Body of pancreas (tissue), 4 donors: ENCODE measurements at regions of chr12 and their contacts with region 1.

Region 1: GRCh38 chr12:62799126-62799736 is 135.7 kb downstream of the PPM1H start:
- DNase-seq: peak; percentile 60 to 69 (median 66)
- ATAC-seq: peak; percentile 68
- H3K4me3 ChIP-seq: no peak overlapping the region
- H3K27ac ChIP-seq: no peak overlapping the region
- H3K4me1 ChIP-seq: no peaks in the 10 kb centered on the region
- H3K27me3 ChIP-seq: no peaks in the 10 kb centered on the region
- CTCF ChIP-seq: peak; percentile 46 to 98 (median 81)
- POLR2A ChIP-seq: no peak

Region 2: GRCh38 chr12:62435303-62436163 is 363.7 kb before region 1 on chr12:
- intact Hi-C with region 1: loop called (anchors 5 kb)
- DNase-seq: peak; percentile 54 to 70 (median 64)
- ATAC-seq: peak; percentile 76
- H3K4me3 ChIP-seq: peak overlapping the region; percentile 21 to 25
- H3K27ac ChIP-seq: no peak overlapping the region
- H3K4me1 ChIP-seq: peaks cover 17% of the 10 kb centered on the region
- H3K27me3 ChIP-seq: no peaks in the 10 kb centered on the region
- CTCF ChIP-seq: peak; percentile 28 to 48 (median 40)
- POLR2A ChIP-seq: peak in 1 of 3 donors; percentile 8

Region 3: GRCh38 chr12:62581288-62582064 is 217.8 kb before region 1 on chr12:
- intact Hi-C with region 1: loop called (anchors 5 kb)
- DNase-seq: no peak
- ATAC-seq: peak; percentile 79
- H3K4me3 ChIP-seq: no peak overlapping the region
- H3K27ac ChIP-seq: no peak overlapping the region
- H3K4me1 ChIP-seq: no peaks in the 10 kb centered on the region
- H3K27me3 ChIP-seq: no peaks in the 10 kb centered on the region
- CTCF ChIP-seq: peak; percentile 41 to 73 (median 65)
- POLR2A ChIP-seq: no peak